MCF 10A (cell line): ENCODE measurements at regions of chr7 and their contacts with region 1.

Region 1: DNA sequence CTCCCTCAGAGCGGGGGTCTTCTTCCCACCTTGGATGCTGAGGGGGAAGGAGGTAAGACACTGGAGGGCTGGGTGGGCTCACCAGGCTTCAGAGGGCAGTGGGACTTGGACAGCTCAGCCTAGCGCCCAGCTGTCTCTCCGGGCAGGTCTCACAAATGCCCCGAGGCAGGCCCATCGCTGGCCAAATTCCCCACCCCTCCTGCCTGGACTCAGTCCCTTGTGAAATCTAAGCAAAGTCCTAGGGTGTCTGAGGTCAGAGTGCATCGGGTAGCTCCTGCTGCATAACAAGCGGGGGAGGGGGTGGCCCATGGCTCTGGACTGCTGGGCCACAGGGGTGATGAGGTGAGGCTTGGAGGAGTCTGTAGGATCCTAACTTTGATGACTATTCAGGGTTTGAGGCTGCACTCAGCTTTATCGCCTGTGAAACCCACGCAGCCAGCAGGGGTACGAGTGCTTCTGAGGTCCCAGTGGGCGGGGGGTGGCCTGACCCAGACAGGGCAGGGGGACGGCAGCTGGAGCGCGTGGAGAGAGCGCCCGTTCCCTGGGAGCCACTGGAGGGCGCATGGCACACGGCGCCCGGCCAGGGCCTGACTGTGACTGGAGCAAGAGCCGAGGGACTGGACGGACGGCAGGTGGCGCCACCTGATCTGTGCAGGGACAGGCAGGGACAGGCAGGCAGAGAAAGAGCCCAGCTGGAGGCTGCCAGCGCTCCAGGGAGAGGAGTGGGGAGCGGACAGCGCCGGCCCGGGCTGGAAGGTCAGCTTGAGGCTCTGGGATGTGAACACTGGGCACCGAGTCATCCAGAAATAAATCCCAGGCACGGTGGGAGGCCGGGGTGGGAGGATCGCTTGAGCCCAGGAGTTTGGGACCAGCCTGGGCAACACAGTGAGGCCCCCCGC is 10.0 kb downstream of the CYP2W1 start:
- DNase-seq: peak; percentile 93
- H3K4me3 Mint-ChIP-seq: no peak overlapping the region
- H3K27ac Mint-ChIP-seq: no peak overlapping the region
- H3K4me1 Mint-ChIP-seq: peaks cover 6% of the 10 kb centered on the region
- H3K27me3 Mint-ChIP-seq: no peaks in the 10 kb centered on the region
- CTCF ChIP-seq: peak; percentile 99

Region 2: GRCh38 chr7:691368-692040 is 301.5 kb before region 1 on chr7:
- CTCF ChIA-PET with region 1: no interaction called
- POLR2A ChIA-PET with region 1: no interaction called
- intact Hi-C with region 1: no loop called
- DNase-seq: no peak
- H3K4me3 Mint-ChIP-seq: no peak overlapping the region
- H3K27ac Mint-ChIP-seq: no peak overlapping the region
- H3K4me1 Mint-ChIP-seq: no peaks in the 10 kb centered on the region
- H3K27me3 Mint-ChIP-seq: no peaks in the 10 kb centered on the region
- CTCF ChIP-seq: no peak

Region 3: DNA sequence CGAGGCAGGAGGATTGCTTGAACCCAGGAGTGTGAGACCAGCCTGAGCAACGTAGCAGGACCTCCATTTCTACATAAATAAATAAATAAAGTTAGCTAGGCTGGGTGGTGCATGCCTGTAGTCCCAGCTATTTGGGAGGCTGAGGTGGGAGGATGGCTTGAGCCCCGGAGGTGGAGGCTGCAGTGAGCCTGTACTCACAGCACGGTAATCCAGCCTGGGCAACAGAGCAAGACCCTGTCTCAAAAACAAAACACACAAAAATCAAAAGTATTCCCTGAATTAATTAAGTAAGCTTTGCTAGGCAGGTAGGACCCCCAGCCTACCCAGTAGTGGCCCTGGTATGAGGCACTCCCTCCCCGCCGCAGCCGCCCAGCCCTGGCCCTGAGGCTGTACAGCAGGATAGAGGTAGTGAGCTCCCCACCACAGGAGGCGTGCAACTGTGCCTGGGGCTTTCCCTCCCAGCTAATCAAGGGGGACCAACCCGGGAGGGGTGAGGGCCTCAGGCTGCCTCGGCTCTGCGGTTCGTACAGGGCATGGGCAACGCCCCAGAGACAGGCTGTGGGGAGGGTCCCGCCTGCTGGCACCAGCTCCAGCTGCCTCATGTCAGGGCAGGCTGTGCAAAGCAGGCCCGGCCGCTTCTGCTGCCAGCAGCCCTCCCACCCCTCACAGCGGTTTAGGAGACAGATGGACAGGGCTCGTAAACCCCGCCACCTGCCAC is 11.0 kb before region 1 on chr7:
- CTCF ChIA-PET with region 1: interaction called, 27 read pairs
- POLR2A ChIA-PET with region 1: no interaction called
- intact Hi-C with region 1: no loop called
- DNase-seq: no peak
- H3K4me3 Mint-ChIP-seq: no peak overlapping the region
- H3K27ac Mint-ChIP-seq: no peak overlapping the region
- H3K4me1 Mint-ChIP-seq: no peaks in the 10 kb centered on the region
- H3K27me3 Mint-ChIP-seq: no peaks in the 10 kb centered on the region
- CTCF ChIP-seq: no peak

Region 4: GRCh38 chr7:1044191-1045068 is 51.5 kb after region 1 on chr7 and contains the start of gene GPR146:
- CTCF ChIA-PET with region 1: interaction called, 8 read pairs
- POLR2A ChIA-PET with region 1: interaction called, 15 read pairs
- intact Hi-C with region 1: no loop called
- DNase-seq: peak; percentile 96
- H3K4me3 Mint-ChIP-seq: peak within 1 kb of the TSS; percentile 68
- H3K27ac Mint-ChIP-seq: peak within 1 kb of the TSS; percentile 79
- H3K4me1 Mint-ChIP-seq: peaks cover 11% of the 10 kb centered on the region
- H3K27me3 Mint-ChIP-seq: no peaks in the 10 kb centered on the region
- CTCF ChIP-seq: peak; percentile 34
- total RNA-seq, gene GPR146: 0.27 TPM in 1 of 2 replicates, not detected in the other

Region 5: GRCh38 chr7:1076181-1077072 is 83.5 kb after region 1 on chr7:
- CTCF ChIA-PET with region 1: interaction called, 10 read pairs
- POLR2A ChIA-PET with region 1: no interaction called
- intact Hi-C with region 1: no loop called
- DNase-seq: peak; percentile 32
- H3K4me3 Mint-ChIP-seq: peak overlapping the region; percentile 25
- H3K27ac Mint-ChIP-seq: peak overlapping the region; percentile 32
- H3K4me1 Mint-ChIP-seq: peaks cover 6% of the 10 kb centered on the region
- H3K27me3 Mint-ChIP-seq: no peaks in the 10 kb centered on the region
- CTCF ChIP-seq: no peak

Region 6: DNA sequence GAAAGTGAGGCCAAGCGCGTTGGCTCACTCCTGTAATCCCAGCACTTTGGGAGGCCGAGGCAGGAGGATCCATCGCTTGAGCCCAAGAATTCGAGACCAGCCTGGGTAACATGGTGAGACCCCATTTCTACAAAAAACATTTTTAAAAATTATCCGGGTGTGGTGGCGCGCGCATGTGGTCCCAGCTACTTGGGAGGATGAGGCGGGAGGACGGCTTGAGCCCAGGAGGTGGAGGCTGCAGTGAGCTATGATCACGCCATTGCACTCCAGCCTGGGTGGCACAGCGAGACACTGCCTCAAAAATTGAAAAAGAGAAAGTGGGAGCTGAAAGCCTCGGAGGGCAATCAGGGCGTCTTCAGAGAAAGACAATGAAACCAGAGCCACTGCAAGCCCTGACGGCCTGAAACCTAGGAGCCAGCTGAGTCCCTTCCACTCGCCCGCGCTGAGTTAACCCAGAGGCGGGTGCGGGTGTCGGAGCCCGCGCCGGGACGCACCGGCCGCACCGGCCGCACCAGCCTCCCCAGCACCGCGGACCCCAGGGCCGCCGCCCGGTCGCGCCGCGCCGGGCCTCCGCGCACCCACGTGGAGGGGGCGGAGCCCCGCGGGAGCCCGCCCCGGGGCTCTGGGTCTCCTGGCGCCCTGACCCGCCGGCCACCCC is 144.7 kb after region 1 on chr7:
- CTCF ChIA-PET with region 1: interaction called, 11 read pairs
- POLR2A ChIA-PET with region 1: no interaction called
- intact Hi-C with region 1: no loop called
- DNase-seq: no peak
- H3K4me3 Mint-ChIP-seq: peak overlapping the region; percentile 74
- H3K27ac Mint-ChIP-seq: peak overlapping the region; percentile 94
- H3K4me1 Mint-ChIP-seq: peaks cover 11% of the 10 kb centered on the region
- H3K27me3 Mint-ChIP-seq: no peaks in the 10 kb centered on the region
- CTCF ChIP-seq: no peak

Region 7: DNA sequence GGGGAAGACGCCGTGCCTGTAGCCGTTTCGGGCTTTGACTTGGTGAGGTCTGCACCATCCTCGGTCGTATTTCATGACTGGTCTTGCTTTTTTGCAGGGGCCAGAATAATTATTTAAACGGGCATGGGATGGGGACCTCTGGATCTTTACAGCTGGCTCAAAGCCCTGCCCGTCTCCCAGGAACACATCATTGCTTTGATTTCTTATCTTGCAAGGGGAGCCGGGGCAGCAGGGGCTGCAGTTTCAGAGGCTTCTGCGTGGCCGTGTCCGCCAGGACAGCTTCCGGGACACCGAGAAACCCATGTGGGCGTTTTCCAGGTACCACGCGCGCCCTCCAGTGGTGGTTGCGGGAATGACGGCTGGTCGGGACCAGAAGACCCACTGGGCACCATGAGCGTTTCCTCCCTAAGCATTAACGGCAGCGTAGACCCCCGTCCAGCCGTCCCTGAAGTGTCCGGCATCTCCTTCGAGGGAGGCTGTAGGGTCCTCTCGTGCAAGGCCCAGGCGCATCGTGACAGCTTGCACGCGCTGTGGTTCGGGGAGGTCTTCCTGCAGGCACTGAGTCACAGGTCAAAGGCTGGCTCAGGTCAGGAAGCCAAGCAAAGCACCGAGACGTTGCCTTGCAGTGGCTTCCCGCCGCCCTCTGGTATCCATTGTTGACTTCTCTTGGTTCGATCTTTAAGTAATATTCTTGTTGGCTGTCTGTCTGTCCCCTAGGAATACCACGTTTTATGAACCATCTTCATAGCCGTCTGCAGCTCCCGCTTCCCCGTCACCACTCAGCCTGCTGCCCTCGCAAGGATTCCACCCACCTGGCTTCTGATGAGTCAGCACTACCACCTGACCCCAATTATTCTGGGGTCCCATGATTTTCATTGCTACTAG is 183.3 kb after region 1 on chr7:
- CTCF ChIA-PET with region 1: interaction called, 69 read pairs
- POLR2A ChIA-PET with region 1: interaction called, 3 read pairs
- intact Hi-C with region 1: loop called (anchors 1 kb)
- DNase-seq: peak; percentile 79
- H3K4me3 Mint-ChIP-seq: peak overlapping the region; percentile 54
- H3K27ac Mint-ChIP-seq: peak overlapping the region; percentile 35
- H3K4me1 Mint-ChIP-seq: peaks cover 5% of the 10 kb centered on the region
- H3K27me3 Mint-ChIP-seq: no peaks in the 10 kb centered on the region
- CTCF ChIP-seq: peak; percentile 93

Region 8: GRCh38 chr7:1193593-1194424 is 200.9 kb after region 1 on chr7:
- CTCF ChIA-PET with region 1: interaction called, 11 read pairs
- POLR2A ChIA-PET with region 1: no interaction called
- intact Hi-C with region 1: no loop called
- DNase-seq: peak; percentile 67
- H3K4me3 Mint-ChIP-seq: no peak overlapping the region
- H3K27ac Mint-ChIP-seq: no peak overlapping the region
- H3K4me1 Mint-ChIP-seq: no peaks in the 10 kb centered on the region
- H3K27me3 Mint-ChIP-seq: peaks cover 17% of the 10 kb centered on the region
- CTCF ChIP-seq: peak; percentile 78